Right ventricle myocardium superior (tissue), 1 donor: ENCODE measurements at regions of chr1 and their contacts with region 1.

Region 1: DNA sequence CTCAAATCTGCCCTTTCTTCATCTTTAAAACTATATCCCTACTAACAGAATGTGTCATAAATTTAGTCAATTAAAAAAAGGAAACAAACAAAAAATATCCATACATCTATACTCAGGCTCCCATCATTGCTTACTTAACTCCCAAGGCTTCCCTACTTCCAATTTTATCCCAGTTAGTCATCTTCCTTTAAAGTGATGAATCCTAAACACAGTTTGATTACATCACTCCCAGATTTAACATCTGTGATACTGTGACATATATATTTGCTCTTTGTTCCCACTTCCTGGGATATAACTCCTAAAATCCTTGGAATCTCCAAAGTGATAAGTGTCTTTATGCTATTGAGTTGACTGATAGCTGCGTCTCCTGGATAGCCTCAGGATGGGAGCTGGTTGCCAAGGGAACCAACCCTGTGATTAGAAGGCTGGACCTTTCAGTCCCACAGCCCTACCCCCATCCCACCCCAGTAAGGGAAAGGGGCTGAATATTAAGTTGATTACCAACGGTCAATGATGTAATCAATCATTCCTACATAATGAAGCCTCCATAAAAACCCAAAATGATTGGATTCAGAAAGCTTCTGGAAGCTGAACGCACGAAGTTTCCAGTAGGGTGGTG is 21.6 kb downstream of the GLMN start:
- DNase-seq: no peak
- ATAC-seq: no peak

Region 2: DNA sequence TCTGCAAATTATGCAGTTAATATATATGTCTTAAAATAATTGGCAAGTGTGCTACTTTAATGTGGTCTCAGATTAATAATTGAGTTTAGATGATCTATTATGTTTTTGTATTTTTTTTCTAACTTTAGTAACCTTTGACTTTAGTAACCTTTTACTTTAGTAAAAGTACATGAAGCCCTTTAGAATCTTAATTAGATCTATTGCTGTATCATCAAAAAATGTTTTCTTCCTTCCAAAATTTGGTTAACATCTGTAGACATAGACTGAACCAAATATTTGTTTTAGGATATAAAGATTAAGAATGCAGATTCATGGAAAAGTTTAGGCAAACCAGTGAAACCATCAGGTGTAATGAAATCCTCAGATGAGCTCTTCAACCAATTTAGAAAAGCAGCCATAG is 273.1 kb before region 1 on chr1:
- intact Hi-C with region 1: loop called (anchors 10 kb)
- DNase-seq: no peak
- ATAC-seq: no peak